ENCODE measurements at regions of chr1 and their contacts with region 1.

Region 1: DNA sequence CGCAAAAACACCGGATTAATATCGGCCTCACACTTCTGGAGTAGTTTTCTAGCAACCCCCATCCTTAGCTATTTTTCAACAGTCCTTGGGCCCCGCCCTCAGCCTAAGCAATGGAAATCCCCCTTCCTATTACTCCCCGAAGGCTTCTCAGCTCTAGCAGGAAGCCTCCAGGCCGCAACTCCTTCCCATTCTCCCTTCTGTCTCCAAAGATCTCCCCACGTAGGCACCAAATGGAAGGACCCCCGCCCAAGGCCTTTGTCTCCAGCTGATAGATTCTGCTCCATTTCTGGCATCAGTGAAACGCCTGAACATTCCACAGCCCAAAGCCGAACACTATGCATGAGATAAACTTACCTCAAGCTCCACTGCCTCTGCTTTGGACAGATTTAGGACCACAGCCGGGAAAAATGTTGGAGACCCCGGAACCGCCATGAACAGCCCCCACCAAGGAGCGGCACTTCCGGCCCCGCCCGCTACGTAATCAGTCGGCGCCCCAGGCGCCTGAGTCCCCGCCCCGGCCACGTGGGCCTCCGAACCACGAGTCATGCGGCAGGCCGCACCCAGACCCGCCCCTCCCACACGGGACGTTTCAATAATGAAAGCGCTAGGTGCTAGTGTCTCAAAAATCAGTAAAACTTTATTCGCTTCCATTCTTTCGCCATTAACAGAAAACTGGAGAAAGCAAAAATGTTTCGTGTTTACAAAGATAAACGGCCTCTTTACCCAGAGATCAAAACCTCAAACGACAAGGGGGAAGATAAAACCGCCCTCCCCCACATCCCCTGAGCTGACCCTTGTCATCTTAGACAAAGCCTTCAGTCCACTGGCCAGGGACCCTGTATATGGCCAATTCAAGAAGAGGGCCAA is at the start of gene NRAS:
- DNase-seq: peak; percentile 94
- H3K4me3 ChIP-seq: peak within 1 kb of the TSS; percentile 87
- H3K27ac ChIP-seq: peak within 1 kb of the TSS; percentile 54
- H3K4me1 ChIP-seq: peaks cover 16% of the 10 kb centered on the region
- CTCF ChIP-seq: no peak
- total RNA-seq, gene NRAS: 28.5 and 32.6 TPM in 2 replicates

Region 2: DNA sequence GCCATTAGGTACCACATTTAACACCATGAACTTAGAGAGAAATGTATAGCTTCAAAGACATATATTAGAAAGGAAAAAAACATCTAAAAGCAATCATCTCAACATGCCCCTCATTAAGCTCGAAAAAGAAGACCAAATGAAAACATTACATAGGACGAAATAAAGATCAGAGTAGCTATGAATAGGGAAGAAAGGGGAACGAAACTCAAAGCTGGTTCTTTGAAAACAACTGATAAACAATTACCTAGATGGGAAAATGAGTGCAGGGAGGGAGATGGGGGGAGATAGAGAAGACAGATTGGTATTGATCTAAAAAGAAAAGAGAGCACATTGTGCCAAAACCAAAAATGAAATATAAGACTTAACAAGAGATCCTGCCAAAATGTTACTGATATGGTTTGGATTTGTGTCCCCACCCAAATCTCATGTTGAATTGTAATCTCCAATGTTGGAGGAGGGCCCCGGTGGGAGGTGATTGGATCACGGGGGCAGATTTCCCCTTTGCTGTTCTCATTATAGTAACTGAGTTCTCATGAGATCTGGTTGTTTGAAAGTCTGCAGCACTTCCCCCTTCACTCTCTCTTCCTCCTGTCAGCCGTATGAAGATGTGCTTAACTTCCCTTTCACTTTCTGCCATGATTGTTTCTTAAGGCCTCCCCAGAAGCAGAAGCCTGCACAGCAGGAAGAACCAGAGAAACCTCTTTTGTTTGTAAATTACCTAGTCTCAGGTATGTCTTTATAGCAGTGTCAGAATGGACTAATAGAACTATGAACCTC is 234.1 kb before region 1 on chr1:
- CTCF ChIA-PET with region 1: no interaction called
- POLR2A ChIA-PET with region 1: no interaction called
- intact Hi-C with region 1: no loop called
- DNase-seq: peak; percentile 80
- H3K4me3 ChIP-seq: peak overlapping the region; percentile 34
- H3K27ac ChIP-seq: peak overlapping the region; percentile 72
- H3K4me1 ChIP-seq: peaks cover 19% of the 10 kb centered on the region
- CTCF ChIP-seq: no peak

Region 3: DNA sequence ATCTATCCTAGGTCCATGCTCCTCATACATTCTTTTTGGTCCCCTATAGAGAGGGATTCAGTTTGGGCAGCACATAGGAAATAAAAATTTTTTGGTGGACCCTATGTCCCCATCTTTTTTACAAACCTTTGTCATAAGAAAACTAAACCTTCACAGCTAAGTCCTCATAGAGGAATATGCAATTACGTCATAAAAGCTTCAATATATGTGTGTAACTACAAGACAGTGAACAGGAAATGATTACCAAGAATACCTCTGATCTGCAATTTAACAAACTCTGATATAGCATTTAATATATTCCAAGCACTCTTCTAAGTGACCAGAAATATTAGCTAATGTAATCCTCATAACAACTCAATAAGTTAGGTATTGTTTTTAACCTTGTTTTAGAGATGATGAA is 40.4 kb before region 1 on chr1:
- CTCF ChIA-PET with region 1: no interaction called
- POLR2A ChIA-PET with region 1: no interaction called
- intact Hi-C with region 1: no loop called
- DNase-seq: no peak
- H3K4me3 ChIP-seq: no peak overlapping the region
- H3K27ac ChIP-seq: no peak overlapping the region
- H3K4me1 ChIP-seq: no peaks in the 10 kb centered on the region
- CTCF ChIP-seq: no peak

Region 4: GRCh38 chr1:114703242-114703641 is 13.3 kb before region 1 on chr1:
- CTCF ChIA-PET with region 1: no interaction called
- POLR2A ChIA-PET with region 1: interaction called, 16 read pairs
- intact Hi-C with region 1: no loop called
- DNase-seq: no peak
- H3K4me3 ChIP-seq: no peak overlapping the region
- H3K27ac ChIP-seq: no peak overlapping the region
- H3K4me1 ChIP-seq: no peaks in the 10 kb centered on the region
- CTCF ChIP-seq: no peak

Region 5: DNA sequence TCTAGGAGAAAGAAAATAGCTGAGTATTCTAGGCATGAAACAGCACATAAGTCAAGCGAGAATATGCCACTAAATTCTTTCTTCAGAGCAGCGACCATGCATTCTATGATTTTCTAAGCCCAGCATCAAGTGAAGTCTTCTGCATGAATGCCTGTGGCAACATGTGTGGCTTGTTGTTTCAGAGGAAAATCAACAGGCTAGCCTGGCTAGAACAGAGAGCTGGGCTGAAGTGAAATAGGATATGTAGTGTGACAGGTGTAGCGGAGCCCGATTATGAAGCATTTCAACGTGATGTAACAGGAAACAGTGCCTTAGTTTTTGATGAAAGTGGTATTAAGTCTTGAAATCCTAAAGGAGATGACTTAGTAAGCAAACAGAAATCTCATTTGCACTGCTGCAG is 34.2 kb after region 1 on chr1:
- CTCF ChIA-PET with region 1: no interaction called
- POLR2A ChIA-PET with region 1: interaction called, 8 read pairs
- intact Hi-C with region 1: loop called (anchors 5 kb)
- DNase-seq: no peak
- H3K4me3 ChIP-seq: no peak overlapping the region
- H3K27ac ChIP-seq: no peak overlapping the region
- H3K4me1 ChIP-seq: peaks cover 39% of the 10 kb centered on the region
- CTCF ChIP-seq: no peak

Region 6: DNA sequence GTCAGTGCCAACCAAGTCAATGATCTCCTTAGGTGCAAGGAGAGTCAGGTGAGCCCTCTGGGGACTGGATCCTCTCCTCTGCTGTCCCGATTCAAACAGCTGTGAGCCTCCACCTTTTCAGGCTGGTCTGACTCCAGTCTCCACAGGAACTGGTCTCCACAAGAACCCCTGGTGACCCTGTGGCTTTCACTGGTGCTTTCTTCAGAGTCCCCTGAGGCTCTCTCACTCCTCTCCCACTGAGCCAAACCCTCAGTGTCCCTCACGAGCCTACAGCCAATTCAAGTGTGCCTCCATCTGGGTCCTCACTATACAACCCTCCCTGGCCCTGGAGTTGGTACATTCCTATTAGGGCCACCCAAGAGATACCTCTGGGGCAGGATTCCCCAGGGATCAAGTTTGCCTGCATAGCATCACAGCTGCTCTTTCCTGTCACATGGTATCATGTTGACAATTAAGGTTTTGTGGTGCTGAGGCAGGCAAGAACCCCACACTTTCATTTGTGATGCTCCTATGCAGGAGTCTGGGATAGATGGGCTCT is 626.7 kb after region 1 on chr1:
- CTCF ChIA-PET with region 1: no interaction called
- POLR2A ChIA-PET with region 1: no interaction called
- intact Hi-C with region 1: no loop called
- DNase-seq: peak; percentile 95
- H3K4me3 ChIP-seq: peak overlapping the region; percentile 37
- H3K27ac ChIP-seq: peak overlapping the region; percentile 64
- H3K4me1 ChIP-seq: peaks cover 62% of the 10 kb centered on the region
- CTCF ChIP-seq: no peak